ENCODE measurements at regions of chr17 and their contacts with region 1.

Region 1: DNA sequence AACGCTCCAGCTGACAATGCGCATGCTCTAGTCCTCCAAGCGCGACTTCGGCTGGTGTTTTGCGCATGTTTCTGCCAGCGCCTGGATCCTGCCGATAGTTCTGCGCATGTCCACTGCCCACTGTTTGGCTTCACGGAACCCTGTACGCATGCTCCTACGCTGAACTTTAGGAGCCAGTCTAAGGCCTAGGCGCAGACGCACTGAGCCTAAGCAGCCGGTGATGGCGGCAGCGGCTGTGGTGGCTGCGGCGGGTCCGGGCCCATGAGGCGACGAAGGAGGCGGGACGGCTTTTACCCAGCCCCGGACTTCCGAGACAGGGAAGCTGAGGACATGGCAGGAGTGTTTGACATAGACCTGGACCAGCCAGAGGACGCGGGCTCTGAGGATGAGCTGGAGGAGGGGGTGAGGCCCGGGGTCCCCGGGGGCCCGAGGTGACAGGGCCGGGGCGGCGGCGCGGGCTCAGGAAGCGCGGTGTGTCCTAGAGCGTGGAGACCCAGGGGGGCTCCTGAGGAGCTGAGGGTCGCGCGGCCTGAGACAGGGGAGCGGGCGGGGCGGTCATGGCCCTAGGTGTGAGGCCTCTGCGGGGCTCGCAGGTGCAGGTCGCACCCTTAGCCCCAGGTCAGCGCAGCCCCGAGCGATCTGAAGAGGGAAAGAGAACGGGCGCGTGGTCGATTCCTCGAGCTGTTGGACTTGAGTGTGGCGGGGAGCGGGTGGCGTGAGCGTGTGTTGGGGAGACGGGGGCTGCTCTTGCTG is at the starts of genes RPS6KB1 and TUBD1:
- DNase-seq: peak; percentile 98
- H3K4me3 Mint-ChIP-seq: peak within 1 kb of the TSS; percentile 97
- H3K27ac Mint-ChIP-seq: peak within 1 kb of the TSS; percentile 97
- H3K4me1 Mint-ChIP-seq: peaks cover 29% of the 10 kb centered on the region
- H3K27me3 Mint-ChIP-seq: no peaks in the 10 kb centered on the region
- total RNA-seq, gene RPS6KB1: 65.9 and 70.1 TPM in 2 replicates
- total RNA-seq, gene TUBD1: 8.2 and 9.3 TPM in 2 replicates

Region 2: GRCh38 chr17:59964482-59965328 is 71.6 kb after region 1 on chr17 and contains the start of gene RNFT1:
- intact Hi-C with region 1: loop called (anchors 2 kb)
- DNase-seq: peak; percentile 85
- H3K4me3 Mint-ChIP-seq: peak within 1 kb of the TSS; percentile 91
- H3K27ac Mint-ChIP-seq: peak within 1 kb of the TSS; percentile 96
- H3K4me1 Mint-ChIP-seq: peaks cover 19% of the 10 kb centered on the region
- H3K27me3 Mint-ChIP-seq: no peaks in the 10 kb centered on the region
- total RNA-seq, gene RNFT1: 32.7 TPM in 2 replicates

Region 3: DNA sequence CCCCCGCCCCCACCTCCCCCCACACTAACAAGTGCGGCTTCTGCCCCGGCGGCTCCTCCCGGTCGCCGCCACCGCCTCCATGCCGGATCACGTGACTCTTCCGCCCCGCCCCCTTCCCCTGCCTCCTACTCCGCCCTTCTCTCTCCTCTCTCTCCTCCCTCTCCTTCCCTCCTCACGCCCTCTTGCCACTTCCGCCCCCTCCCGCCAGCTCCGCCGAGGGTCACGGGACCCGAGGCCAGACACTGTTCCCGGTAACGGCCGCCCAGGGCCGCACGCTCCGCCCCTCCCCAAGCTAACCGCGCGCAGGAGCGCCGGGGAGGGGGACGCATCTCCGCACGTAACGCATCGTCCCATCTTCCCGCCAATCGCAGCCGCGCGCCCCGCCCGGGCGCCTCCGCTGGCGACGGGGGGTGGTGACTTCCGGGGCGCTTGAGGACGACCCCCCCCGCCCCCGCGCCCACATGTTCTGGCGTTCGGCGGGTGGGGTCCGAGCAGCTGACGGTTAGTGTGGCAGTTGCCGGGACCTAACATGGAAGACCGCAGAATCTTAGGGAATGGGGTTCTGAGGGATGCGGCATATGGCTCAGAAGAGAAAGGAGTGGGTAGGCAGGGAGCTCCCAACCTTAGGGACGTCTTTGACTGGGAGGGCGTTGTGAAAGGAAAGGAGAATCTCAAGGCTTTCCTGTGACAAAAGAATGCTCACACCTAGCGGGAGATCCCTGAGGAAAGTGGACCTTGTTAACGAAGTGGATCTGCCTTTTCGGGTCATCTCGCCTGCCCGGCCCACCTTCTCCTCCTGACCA is 499.1 kb after region 1 on chr17 and contains the start of gene USP32:
- intact Hi-C with region 1: loop called (anchors 2 kb)
- DNase-seq: peak; percentile 97
- H3K4me3 Mint-ChIP-seq: peak within 1 kb of the TSS; percentile 93
- H3K27ac Mint-ChIP-seq: peak within 1 kb of the TSS; percentile 97
- H3K4me1 Mint-ChIP-seq: peaks cover 50% of the 10 kb centered on the region
- H3K27me3 Mint-ChIP-seq: no peaks in the 10 kb centered on the region
- total RNA-seq, gene USP32: 31.9 and 36.3 TPM in 2 replicates

Region 4: DNA sequence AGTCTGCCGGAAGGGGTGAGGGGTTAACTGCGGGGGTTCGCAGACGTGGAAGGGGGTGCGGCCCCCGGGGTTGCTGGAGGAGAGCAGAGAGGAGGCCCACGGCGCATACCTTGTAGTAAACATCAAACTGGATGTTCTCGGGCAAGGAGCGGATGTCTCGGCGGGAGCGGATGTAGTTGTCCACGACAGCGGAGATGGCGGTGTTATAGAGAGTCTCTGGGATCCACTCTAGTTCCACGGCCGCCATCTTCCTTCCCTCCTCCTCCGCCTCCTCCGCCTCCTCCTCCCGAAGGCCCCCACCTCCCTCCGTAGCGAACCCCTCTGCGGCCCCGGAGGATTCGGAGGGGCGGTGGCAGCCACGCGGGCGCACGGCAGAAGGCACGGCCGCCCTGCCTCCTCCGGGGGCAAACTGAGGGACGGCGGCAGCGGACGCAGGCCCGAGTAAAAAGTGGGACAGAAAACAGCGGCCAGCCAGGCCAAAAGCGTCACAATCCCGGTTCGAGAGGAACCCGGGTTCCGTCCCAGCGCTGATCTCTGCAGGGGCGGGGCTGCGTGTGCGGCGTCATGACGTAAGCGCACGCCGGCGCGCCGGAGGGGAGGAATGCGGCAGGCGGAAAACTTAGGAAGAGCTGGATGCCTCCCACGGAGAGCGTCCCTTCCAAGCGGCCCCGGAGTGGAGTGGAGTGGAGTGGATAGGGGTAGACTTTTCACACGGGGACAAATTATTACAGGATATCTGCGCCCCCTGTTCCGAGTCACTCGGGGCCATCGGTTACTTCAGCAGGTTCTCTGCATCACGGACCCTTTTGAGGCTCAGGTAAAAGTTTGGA is 632.8 kb after region 1 on chr17 and contains the start of gene APPBP2:
- intact Hi-C with region 1: loop called (anchors 5 kb)
- DNase-seq: peak; percentile 68
- H3K4me3 Mint-ChIP-seq: peak within 1 kb of the TSS; percentile 99
- H3K27ac Mint-ChIP-seq: peak within 1 kb of the TSS; percentile 92
- H3K4me1 Mint-ChIP-seq: peaks cover 29% of the 10 kb centered on the region
- H3K27me3 Mint-ChIP-seq: no peaks in the 10 kb centered on the region
- total RNA-seq, gene APPBP2: 23.2 and 26.9 TPM in 2 replicates